ENCODE measurements at regions of chrX and their contacts with region 1.

Region 1: DNA sequence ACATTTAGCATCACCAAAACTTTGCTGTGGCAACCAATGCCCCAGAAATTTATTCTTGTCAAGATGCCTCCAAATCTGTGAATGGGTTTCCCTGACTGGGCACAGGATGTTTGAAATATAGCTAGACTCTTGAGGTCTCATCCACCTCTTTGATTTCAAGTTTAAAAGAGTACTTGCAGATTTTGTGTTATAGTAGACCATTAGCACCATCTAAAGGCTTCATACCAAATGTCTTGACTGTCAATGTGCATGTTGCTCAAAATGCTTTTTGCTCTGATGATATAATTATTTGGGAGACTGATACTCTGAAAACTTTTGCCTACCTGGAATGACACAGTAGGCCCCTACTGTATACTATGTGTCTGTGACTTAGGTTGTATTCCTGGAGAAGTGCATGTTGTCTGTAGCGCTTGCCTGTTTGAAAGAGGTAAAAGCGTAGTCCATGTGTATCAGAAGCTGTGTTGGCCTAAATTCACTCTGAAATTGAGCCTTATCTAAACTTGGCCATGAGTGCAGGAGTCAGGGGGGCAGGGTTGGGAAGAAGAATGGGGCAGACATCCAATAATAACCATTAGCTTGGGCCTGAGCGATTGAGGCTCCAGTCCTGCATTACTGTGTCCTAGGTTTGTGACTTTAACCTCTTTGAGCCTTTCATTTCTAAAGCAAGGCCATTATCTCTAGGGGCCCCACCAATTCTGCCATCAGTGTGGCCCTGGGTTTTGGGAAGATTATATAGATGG is 33.8 kb downstream of the NDP start:
- DNase-seq: peak; percentile 36
- ATAC-seq: peak; percentile 42; the same call in 1 of the 2 replicates
- H3K4me3 ChIP-seq: no peak overlapping the region
- H3K27ac ChIP-seq: no peak overlapping the region
- H3K4me1 ChIP-seq: peaks cover 13% of the 10 kb centered on the region
- H3K27me3 ChIP-seq: no peaks in the 10 kb centered on the region
- CTCF ChIP-seq: peak; percentile 46

Region 2: DNA sequence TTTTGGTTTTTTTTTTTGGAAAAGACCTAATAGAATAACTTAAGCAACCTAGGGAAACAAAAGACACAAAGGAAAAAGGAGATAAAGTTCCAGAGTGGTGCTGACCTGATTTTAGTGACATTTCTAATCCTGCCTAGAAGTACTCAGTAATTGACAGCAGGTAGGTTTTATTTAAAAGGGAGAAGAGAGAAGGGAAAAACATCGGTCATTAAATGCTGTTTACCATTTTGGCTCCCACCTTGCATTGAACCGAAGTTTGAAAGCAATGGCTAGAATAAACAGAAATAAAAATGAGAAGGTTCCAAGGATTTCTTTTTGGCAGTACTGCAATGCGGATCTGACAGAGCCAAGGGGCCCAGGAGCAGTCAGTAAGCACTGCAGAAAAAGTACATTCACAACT is 399.0 kb before region 1 on chrX:
- CTCF ChIA-PET with region 1: no interaction called
- POLR2A ChIA-PET with region 1: no interaction called
- intact Hi-C with region 1: no loop called
- DNase-seq: no peak
- ATAC-seq: no peak
- H3K4me3 ChIP-seq: no peak overlapping the region
- H3K27ac ChIP-seq: no peak overlapping the region
- H3K4me1 ChIP-seq: no peaks in the 10 kb centered on the region
- H3K27me3 ChIP-seq: no peaks in the 10 kb centered on the region
- CTCF ChIP-seq: no peak

Region 3: GRCh38 chrX:43666311-43666912 is 272.9 kb before region 1 on chrX:
- CTCF ChIA-PET with region 1: no interaction called
- POLR2A ChIA-PET with region 1: no interaction called
- intact Hi-C with region 1: no loop called
- DNase-seq: no peak
- ATAC-seq: no peak
- H3K4me3 ChIP-seq: no peak overlapping the region
- H3K27ac ChIP-seq: no peak overlapping the region
- H3K4me1 ChIP-seq: no peaks in the 10 kb centered on the region
- H3K27me3 ChIP-seq: no peaks in the 10 kb centered on the region
- CTCF ChIP-seq: no peak

Region 4: GRCh38 chrX:43836435-43837184 is 102.7 kb before region 1 on chrX:
- CTCF ChIA-PET with region 1: interaction called, 5 read pairs
- POLR2A ChIA-PET with region 1: no interaction called
- intact Hi-C with region 1: loop called (anchors 1 kb)
- DNase-seq: peak; percentile 65
- ATAC-seq: no peak
- H3K4me3 ChIP-seq: no peak overlapping the region
- H3K27ac ChIP-seq: no peak overlapping the region
- H3K4me1 ChIP-seq: peaks cover 13% of the 10 kb centered on the region
- H3K27me3 ChIP-seq: no peaks in the 10 kb centered on the region
- CTCF ChIP-seq: peak; percentile 70